ENCODE measurements at regions of chr2 and their contacts with region 1.

Region 1: DNA sequence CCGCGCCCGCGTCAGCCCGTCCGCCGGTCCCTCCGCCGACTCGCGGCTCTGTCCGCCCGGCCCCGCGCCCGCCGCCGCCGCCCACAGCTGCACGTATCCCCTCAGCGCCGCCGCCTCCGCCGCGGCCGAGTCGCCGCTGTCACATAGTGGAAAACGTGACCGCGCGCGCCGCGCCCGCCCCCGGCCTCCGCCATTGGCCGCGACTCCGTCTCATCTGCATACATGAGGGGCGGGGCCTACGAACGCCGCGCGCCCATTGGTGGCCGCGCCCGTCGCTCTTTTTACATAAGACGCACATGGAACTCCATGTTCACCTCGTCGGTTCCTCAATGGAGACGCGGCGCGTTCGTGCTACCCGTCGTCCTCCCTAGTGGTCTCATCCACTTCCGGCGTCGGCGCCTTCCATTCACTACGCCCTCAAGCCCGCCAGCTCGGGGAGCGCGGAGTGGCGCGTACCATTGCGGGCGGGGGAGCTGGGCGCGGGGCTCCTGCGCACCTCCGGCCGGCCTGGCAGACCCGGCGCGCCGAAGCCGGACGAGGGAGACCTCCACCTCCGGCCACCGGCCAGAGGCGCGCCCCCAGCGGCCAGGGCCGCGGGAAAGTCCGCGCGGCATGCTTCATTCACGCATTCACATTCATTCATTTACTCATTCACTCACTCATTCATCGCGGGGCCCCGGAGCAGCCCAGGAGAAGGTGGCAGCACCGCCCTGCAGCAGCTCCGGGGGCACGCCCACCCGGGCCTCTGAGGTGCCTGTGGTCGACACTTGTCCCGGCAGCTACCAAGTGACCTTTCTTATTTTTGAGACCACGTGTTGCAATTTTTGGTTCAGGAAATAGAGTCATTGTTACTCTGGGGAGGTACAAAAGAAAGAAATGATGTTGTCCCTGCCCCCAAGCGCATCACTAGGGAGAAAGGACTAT is 502 bp upstream of the PER2 start:
- DNase-seq: peak; percentile 99
- H3K4me3 ChIP-seq: peak overlapping the region; percentile 75 to 86
- H3K27ac ChIP-seq: peak overlapping the region; percentile 96 to 97
- H3K4me1 ChIP-seq: peaks cover 15 to 29% of the 10 kb centered on the region in 2 donors
- H3K27me3 ChIP-seq: no peaks in the 10 kb centered on the region
- CTCF ChIP-seq: peak in 1 of 3 experiments; percentile 38

Region 2: GRCh38 chr2:238169708-238170251 is 119.1 kb before region 1 on chr2:
- intact Hi-C with region 1: loop called (anchors 2 kb)
- DNase-seq: peak in 1 of 2 donors; percentile 88
- H3K4me3 ChIP-seq: no peak overlapping the region
- H3K27ac ChIP-seq: peak overlapping the region; percentile 85 to 91
- H3K4me1 ChIP-seq: peaks cover 8 to 34% of the 10 kb centered on the region in 2 donors
- H3K27me3 ChIP-seq: no peaks in the 10 kb centered on the region
- CTCF ChIP-seq: no peak

Region 3: DNA sequence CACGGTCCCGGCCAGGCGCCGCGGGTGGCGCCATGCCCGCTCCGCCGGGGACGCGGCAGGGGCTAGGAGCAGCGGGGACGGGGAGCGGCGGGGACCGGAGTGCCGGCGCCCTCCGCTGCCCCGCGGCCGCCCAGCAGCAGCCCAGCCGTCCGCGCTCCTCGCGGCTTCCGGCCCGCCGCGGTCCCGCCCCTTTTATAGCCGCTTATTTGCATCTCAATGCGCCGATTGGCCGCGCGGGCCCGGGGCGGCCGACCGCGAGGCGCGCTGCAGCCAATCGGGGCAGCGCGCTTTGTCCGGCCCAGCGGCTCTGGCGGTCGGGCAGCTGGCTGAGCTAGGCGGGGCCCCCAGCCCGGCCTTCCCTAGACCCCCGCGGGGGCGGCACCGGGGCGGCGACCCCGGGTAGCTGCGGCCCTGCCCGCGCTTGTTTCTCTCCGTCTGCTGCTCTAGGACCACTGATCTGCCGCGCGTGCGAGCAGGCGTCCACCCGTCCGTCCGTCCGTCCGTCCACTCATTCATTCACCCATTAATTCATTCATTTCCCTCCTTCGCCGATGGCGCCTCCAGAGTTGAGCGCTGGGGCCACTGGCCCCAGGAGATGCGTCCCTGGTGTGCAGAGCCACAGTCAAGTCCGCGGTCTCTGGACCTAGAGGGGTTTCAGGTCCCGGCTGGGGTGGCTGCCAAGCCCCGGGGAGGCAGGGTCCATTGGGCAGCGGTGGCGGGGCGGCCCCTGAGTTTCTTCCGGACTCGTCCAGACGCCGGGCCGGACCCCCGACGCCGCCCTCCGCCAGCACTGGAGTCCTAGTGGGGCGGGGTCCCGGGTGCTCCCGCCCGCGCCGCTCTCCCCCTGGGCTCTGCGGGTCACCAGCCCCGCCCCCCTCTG is 48.8 kb before region 1 on chr2 and contains the start of gene HES6:
- intact Hi-C with region 1: loop called (anchors 5 kb)
- DNase-seq: peak; percentile 62 to 95
- H3K4me3 ChIP-seq: peak within 1 kb of the TSS; percentile 67 to 92
- H3K27ac ChIP-seq: peak within 1 kb of the TSS; percentile 64 to 79
- H3K4me1 ChIP-seq: peaks cover 0 to 23% of the 10 kb centered on the region in 2 donors
- H3K27me3 ChIP-seq: peaks cover 3% of the 10 kb centered on the region
- CTCF ChIP-seq: no peak
- total RNA-seq, gene HES6: 117 TPM

Region 4: DNA sequence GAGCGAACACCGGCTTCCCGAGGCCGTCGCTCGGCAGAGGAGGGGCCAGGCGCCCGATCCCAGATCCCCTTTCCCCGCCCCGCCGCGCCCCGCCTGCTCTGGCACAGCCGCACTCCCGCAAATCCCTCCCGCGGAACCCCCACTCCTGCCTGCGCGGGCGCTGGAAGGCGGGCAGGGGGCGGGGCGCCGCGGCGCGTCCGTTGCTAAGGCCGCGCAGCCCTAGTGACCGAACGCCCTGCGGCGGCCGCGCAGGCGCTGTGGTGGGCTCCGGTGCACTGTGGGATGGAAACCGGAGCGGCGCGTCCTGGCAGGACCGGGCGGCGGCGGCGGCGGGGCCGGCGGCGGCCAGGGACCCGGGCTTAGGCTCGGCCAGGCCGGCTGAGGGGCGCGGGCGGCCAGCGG is 31.3 kb after region 1 on chr2 and contains the start of gene TRAF3IP1:
- intact Hi-C with region 1: loop called (anchors 1 kb)
- DNase-seq: peak; percentile 67 to 96
- H3K4me3 ChIP-seq: peak within 1 kb of the TSS; percentile 92 to 96
- H3K27ac ChIP-seq: peak within 1 kb of the TSS in 1 of 2 donors; percentile 64
- H3K4me1 ChIP-seq: peaks cover 6 to 11% of the 10 kb centered on the region in 2 donors
- H3K27me3 ChIP-seq: no peaks in the 10 kb centered on the region
- CTCF ChIP-seq: no peak
- total RNA-seq, gene TRAF3IP1: 6.1 TPM